Body of pancreas (tissue), 4 donors: ENCODE measurements at regions of chr5 and their contacts with region 1.

Region 1: DNA sequence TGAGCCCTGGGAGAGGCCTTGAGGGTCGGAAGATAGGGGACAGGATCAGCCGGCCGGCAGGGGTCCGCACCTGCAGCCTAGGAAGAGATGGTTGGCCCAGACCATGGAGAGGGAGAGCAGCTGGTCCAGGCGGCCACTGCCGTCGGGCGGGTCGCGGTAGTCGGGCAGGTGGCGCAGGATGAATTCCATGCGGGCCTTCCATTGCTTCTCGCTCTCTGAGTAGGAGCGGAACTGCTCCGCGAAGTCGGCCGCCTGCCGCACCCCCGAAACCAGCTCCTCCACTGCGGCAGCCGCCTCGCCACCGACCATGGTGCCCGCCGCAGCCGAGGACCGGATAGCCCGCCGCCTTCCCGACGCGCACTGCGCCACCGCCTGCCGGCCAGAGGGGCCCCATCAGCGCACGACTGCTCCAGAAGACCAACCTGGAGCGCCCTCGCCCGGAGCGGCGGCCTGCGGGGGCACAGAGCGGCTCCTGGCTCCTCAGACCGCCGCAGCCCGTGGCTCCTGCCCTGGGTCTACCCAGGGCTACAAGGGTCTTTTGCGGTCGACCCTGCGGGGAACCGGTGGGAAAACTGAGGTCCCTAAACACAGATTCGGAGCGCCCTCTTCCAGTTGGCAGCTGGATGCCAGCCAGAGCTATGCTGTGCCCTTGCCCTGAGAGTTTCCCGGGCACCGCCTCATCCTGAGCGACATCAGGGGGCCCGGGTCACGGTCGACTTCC is at the start of gene CDKN2AIPNL:
- DNase-seq: peak; percentile 91 to 94 (median 92)
- ATAC-seq: peak; percentile 87
- H3K4me3 ChIP-seq: peak within 1 kb of the TSS; percentile 66 to 84
- H3K27ac ChIP-seq: peak within 1 kb of the TSS; percentile 80 to 91 (median 88)
- H3K4me1 ChIP-seq: peaks cover 66% of the 10 kb centered on the region
- H3K27me3 ChIP-seq: no peaks in the 10 kb centered on the region
- CTCF ChIP-seq: peak; percentile 61 to 96 (median 85)
- POLR2A ChIP-seq: peak; percentile 75 to 87 (median 82)
- total RNA-seq, gene CDKN2AIPNL: 3.0 to 14.5 TPM

Region 2: DNA sequence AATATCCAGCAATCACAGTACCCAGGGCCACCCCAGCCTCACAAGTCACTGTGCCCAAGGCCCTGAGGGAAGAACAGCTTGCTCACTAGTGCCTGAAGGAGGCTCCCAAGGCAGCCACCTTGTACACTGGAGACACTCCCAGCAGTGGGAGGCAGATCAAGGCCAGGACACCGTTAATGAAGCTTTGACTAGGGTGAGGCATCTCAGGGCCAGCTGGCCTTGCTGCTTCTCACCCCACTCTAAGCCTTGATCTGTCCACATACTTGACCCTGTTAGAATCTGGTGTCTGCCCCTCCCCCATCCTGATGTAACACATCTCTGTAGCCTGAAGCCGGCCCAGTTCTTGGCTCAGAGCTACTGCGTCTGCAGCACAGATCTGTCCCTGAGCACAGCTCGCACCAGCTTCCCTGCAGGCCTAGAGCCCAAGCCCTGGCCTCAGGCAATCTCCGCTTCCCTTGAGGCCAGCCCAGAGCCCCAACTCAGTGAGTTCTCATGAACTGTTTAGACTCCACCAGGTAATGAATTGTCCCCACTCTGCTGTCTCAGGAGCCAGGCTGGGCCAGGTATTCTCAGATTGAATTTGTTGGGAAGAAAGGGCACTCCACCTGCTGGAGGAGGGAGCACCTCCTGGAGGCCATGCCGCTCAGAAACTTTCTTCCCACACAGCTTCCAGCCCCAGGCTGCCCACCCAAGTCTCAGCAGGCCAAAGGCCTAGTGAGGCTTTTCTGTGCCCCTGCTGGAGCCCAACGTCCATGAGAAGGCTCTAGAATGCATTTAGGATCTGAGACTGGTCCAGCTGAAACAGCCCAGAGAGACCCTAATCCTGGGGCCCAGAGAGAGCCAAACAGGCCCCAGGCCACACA is 100.3 kb after region 1 on chr5:
- intact Hi-C with region 1: loop called (anchors 10 kb)
- DNase-seq: peak; percentile 83 to 92 (median 90)
- ATAC-seq: peak; percentile 73
- H3K4me3 ChIP-seq: no peak overlapping the region
- H3K27ac ChIP-seq: peak overlapping the region; percentile 82 to 89 (median 84)
- H3K4me1 ChIP-seq: peaks cover 59% of the 10 kb centered on the region
- H3K27me3 ChIP-seq: no peaks in the 10 kb centered on the region
- CTCF ChIP-seq: peak; percentile 32 to 70 (median 61)
- POLR2A ChIP-seq: peak in 2 of 3 donors; percentile 45 to 47